RWPE1 (cell line): ENCODE measurements at regions of chr1 and their contacts with region 1.

Region 1: DNA sequence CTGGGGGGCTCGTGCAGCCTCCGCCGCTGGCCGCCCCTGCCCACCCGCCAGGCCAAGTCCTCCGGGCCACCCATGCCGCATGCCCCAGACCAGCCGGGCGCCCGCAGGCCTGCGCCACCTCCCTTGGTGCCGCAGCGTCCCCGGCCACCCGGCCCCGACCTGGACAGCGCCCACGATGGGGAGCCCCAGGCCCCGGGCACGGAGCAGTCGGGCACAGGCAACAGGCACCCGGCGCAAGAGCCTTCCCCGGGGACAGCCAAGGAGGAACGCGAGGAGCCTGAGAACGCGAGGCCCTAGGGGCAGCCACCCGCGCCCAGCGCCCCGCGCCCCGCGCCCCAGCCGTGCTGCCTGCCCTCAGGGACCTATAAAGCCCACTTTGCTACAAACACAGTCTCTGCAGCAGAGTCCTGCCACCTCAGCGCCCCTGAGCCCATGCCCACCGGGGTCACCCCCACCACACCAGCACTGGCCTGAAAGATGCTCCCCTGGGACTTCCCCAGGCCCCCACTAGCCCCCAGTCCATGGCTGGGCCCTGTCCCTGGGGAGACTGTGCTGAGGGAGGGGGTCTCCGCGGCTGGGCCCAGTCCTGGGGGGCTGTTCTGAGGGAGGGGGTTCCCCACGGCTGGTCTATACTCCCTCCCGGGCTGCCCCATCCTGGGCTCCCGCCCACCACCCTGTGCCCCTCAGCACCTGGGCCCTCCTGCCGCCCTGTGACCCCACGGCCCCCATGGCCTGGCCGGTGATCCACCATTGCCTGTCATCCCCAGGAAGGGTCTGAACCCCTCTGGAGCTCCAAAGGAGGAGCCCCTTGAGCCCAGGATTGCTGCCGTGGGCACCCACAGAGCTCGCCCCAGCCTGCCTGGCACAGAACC is 8.6 kb downstream of the TNFRSF18 start:
- DNase-seq: no peak
- H3K27ac ChIP-seq: no peak overlapping the region
- CTCF ChIP-seq: no peak

Region 2: DNA sequence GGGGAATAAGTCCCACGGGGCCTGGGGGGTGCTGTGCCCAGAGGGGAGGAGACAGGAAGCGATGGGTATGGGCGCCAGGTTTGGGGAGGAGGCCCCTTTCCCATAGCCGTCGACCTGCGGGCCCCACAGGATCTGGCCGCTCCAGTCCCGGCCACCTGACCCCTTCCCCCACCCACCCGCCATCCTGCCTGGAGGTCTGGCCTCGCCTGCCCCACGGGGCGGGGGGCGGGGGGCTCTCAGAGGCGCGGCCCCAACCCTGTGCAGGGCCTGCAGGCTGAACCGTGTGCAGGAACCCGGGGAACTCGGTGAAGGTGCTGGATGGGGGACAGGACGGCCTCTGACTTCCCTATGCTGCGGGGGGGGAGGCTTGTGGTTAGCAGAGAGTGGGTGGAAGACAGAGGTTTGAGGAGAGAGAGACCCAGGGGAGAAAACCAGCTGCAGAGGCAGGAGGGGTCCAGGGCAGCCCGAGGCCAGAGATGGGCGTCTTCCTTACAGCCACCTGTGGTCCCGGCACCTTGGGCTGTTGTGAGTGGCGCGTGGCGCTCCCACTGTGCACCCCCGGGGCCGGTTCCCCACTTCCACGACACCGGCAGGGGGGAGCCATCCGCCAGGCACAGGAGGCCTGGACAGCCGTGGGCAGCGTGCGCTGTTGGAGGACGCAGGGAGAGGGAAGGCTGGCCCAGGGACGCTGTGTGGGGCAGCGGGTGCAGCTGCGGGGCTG is 11.1 kb after region 1 on chr1:
- CTCF ChIA-PET with region 1: no interaction called
- POLR2A ChIA-PET with region 1: no interaction called
- DNase-seq: no peak
- H3K27ac ChIP-seq: peak overlapping the region; percentile 68; the same call in 1 of the 2 replicates
- CTCF ChIP-seq: no peak

Region 3: GRCh38 chr1:1273512-1274298 is 75.9 kb after region 1 on chr1 and contains the start of gene UBE2J2:
- CTCF ChIA-PET with region 1: no interaction called
- POLR2A ChIA-PET with region 1: interaction called, 10 read pairs
- DNase-seq: peak; percentile 95
- H3K27ac ChIP-seq: peak within 1 kb of the TSS; percentile 81
- CTCF ChIP-seq: no peak